HepG2 (cell line): ENCODE measurements at regions of chr3 and their contacts with region 1.

Region 1: DNA sequence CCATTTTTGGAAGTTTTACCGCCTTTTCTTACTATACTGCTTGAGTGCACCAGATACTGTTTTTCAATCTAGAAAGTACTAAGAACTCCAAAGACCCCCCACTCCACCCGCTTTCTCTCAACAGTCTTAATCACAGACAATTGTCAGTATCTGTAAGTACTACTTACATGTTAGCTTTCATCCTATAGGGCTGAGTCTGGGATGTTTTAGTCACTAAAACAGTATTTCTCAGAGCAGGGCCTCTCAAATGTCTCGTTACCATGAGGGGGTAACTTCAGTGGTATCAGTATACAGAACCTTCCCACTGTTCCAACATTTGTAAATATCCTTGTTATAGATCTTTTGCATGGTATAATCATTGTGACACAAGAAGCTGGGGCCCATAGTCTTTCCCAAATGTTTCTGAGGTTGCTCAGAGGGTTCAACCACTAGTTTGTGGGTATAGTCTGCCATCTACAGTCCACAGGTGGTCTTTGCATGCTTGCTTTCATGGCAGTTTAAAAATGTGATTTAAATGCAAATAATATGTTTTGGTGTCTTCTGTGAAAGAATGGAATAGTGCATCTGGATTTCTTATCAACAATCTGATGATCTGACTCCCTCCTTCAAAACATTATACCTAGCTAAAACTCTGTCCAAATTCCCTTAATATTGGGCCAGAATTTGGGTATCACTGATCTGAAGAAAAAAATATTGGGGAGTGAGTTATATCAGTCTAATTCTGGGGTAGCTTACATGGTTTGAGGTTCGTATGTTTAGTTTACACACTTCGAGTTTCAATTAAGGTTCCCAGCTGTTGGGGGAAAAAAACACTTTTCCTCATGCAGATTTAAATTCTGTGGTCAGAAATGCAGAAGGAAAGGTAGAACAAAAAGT is 18.0 kb upstream of the DNAJC13 start:
- DNase-seq: peak; percentile 23
- ATAC-seq: peak; percentile 68
- H3K4me3 ChIP-seq: no peak overlapping the region
- H3K27ac ChIP-seq: no peak overlapping the region
- H3K4me1 ChIP-seq: no peaks in the 10 kb centered on the region
- H3K27me3 ChIP-seq: peaks cover 0 to 9% of the 10 kb centered on the region in 2 experiments; a peak in 2 of 5 replicates
- CTCF ChIP-seq: peak; percentile 79
- EP300 ChIP-seq: no peak
- POLR2A ChIP-seq: no peak
- RAD21 ChIP-seq: peak; percentile 69

Region 2: GRCh38 chr3:132034486-132035464 is 364.5 kb before region 1 on chr3 and contains the start of gene CPNE4:
- CTCF ChIA-PET with region 1: no interaction called
- POLR2A ChIA-PET with region 1: no interaction called
- in situ Hi-C with region 1: no loop called
- intact Hi-C with region 1: loop called (anchors 5 kb)
- DNase-seq: peak; percentile 32
- ATAC-seq: peak; percentile 100
- H3K4me3 ChIP-seq: no peak within 1 kb of the TSS
- H3K27ac ChIP-seq: no peak within 1 kb of the TSS
- H3K4me1 ChIP-seq: no peaks in the 10 kb centered on the region
- H3K27me3 ChIP-seq: peaks cover 0 to 10% of the 10 kb centered on the region in 2 experiments; a peak in 1 of 5 replicates
- CTCF ChIP-seq: peak; percentile 82
- EP300 ChIP-seq: no peak
- POLR2A ChIP-seq: no peak
- RAD21 ChIP-seq: peak; percentile 48; the same call in 1 of the 2 replicates
- total RNA-seq, gene CPNE4: not detected in 2 replicates

Region 3: GRCh38 chr3:132253262-132253878 is 145.9 kb before region 1 on chr3:
- CTCF ChIA-PET with region 1: interaction called, 14 read pairs
- POLR2A ChIA-PET with region 1: no interaction called
- in situ Hi-C with region 1: loop called (anchors 5 kb)
- intact Hi-C with region 1: loop called (anchors 1 kb)
- DNase-seq: peak; percentile 43
- ATAC-seq: peak; percentile 66
- H3K4me3 ChIP-seq: no peak overlapping the region
- H3K27ac ChIP-seq: no peak overlapping the region
- H3K4me1 ChIP-seq: no peaks in the 10 kb centered on the region
- H3K27me3 ChIP-seq: no peaks in the 10 kb centered on the region
- CTCF ChIP-seq: peak; percentile 65
- EP300 ChIP-seq: no peak
- POLR2A ChIP-seq: no peak
- RAD21 ChIP-seq: no peak

Region 4: GRCh38 chr3:132352541-132353143 is 46.6 kb before region 1 on chr3:
- CTCF ChIA-PET with region 1: interaction called, 69 read pairs
- POLR2A ChIA-PET with region 1: no interaction called
- in situ Hi-C with region 1: loop called (anchors 5 kb)
- intact Hi-C with region 1: loop called (anchors 1 kb)
- DNase-seq: peak; percentile 53
- ATAC-seq: peak; percentile 63; the same call in 2 of the 3 replicates
- H3K4me3 ChIP-seq: no peak overlapping the region
- H3K27ac ChIP-seq: no peak overlapping the region
- H3K4me1 ChIP-seq: no peaks in the 10 kb centered on the region
- H3K27me3 ChIP-seq: peaks cover 0 to 3% of the 10 kb centered on the region in 2 experiments; a peak in 1 of 5 replicates
- CTCF ChIP-seq: peak; percentile 81
- EP300 ChIP-seq: no peak
- POLR2A ChIP-seq: no peak
- RAD21 ChIP-seq: peak; percentile 64